Heart left ventricle (tissue), 16 donors: ENCODE measurements at regions of chr1 and their contacts with region 1.

Region 1: GRCh38 chr1:20151906-20152598 is 12.9 kb downstream of the PLA2G2F start:
- DNase-seq: peak; percentile 81 to 92 (median 90)
- ATAC-seq: peak; percentile 85 to 95 (median 92)
- H3K4me3 ChIP-seq: peak overlapping the region; percentile 3 to 55 (median 43)
- H3K27ac ChIP-seq: peak overlapping the region in 5 of 12 donors; percentile 18 to 79 (median 40)
- H3K4me1 ChIP-seq: peaks cover 0 to 27% (median 10%) of the 10 kb centered on the region in 12 donors
- H3K27me3 ChIP-seq: peaks cover 0 to 7% (median 0%) of the 10 kb centered on the region in 9 donors
- CTCF ChIP-seq: peak; percentile 90 to 97 (median 94)
- POLR2A ChIP-seq: no peak

Region 2: GRCh38 chr1:19300211-19300610 is 851.8 kb before region 1 on chr1:
- intact Hi-C with region 1: no loop called
- DNase-seq: no peak
- ATAC-seq: no peak
- H3K4me3 ChIP-seq: no peak overlapping the region
- H3K27ac ChIP-seq: no peak overlapping the region
- H3K4me1 ChIP-seq: no peaks in the 10 kb centered on the region
- H3K27me3 ChIP-seq: no peaks in the 10 kb centered on the region
- CTCF ChIP-seq: no peak
- POLR2A ChIP-seq: no peak

Region 3: GRCh38 chr1:19918057-19918456 is 234.0 kb before region 1 on chr1:
- intact Hi-C with region 1: loop called (anchors 1 to 2 kb)
- DNase-seq: peak; percentile 74 to 86 (median 79)
- ATAC-seq: peak; percentile 69 to 84 (median 71)
- H3K4me3 ChIP-seq: no peak overlapping the region
- H3K27ac ChIP-seq: no peak overlapping the region
- H3K4me1 ChIP-seq: peaks cover 0 to 11% (median 0%) of the 10 kb centered on the region in 12 donors
- H3K27me3 ChIP-seq: peaks cover 0 to 5% (median 0%) of the 10 kb centered on the region in 9 donors
- CTCF ChIP-seq: peak; percentile 83 to 94 (median 89)
- POLR2A ChIP-seq: no peak

Region 4: GRCh38 chr1:19974822-19975416 is 177.1 kb before region 1 on chr1:
- intact Hi-C with region 1: loop called in 8 of 10 experiments (anchors 1 to 10 kb)
- DNase-seq: peak in 4 of 5 donors; percentile 55 to 58 (median 56)
- ATAC-seq: peak; percentile 79 to 85 (median 84)
- H3K4me3 ChIP-seq: peak overlapping the region in 1 of 12 donors; percentile 26
- H3K27ac ChIP-seq: peak overlapping the region in 3 of 12 donors; percentile 1 to 24 (median 16)
- H3K4me1 ChIP-seq: peaks cover 0 to 18% (median 10%) of the 10 kb centered on the region in 12 donors
- H3K27me3 ChIP-seq: no peaks in the 10 kb centered on the region
- CTCF ChIP-seq: peak; percentile 58 to 87 (median 82)
- POLR2A ChIP-seq: no peak

Region 5: DNA sequence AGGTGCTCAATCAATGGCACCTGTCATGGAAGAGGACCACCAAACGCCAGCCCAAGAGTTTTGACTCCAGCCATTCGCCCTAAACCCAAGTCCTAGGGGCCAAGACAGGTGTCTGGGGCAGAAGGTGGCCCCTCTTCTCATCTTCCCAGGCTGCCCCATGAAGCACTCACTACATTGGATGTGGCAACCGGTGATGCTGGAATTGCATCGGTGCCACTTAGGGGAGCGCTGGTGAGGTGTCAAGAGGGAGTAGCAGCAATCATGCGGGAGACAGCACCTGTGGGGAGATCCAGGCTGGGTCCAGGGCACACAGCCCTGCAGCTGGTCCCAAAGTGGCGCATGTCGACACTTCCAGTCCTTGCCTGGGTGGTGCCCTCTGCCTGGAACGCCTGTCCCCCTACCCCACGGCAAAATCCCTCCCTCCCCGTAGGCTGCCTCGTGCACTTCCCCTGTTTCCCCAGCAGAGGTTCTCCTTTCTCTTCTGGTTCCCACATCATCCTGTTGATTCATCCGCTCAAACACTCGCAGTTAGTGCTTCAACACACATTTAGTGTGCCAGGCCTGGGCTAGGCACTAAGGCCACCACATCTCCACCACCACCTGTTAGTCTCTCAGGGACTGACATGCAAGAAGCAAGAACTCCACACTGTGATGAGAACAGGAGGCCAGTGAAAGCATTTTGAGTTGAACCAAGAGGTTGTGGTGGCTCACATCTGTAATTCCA is 51.3 kb before region 1 on chr1:
- intact Hi-C with region 1: loop called (anchors 2 to 10 kb)
- DNase-seq: peak in 4 of 5 donors; percentile 30 to 43 (median 38)
- ATAC-seq: peak in 3 of 4 donors; percentile 82 to 87 (median 83)
- H3K4me3 ChIP-seq: no peak overlapping the region
- H3K27ac ChIP-seq: no peak overlapping the region
- H3K4me1 ChIP-seq: peaks cover 0 to 10% (median 0%) of the 10 kb centered on the region in 12 donors
- H3K27me3 ChIP-seq: peaks cover 0 to 5% (median 0%) of the 10 kb centered on the region in 9 donors
- CTCF ChIP-seq: peak; percentile 59 to 77 (median 70)
- POLR2A ChIP-seq: no peak

Region 6: DNA sequence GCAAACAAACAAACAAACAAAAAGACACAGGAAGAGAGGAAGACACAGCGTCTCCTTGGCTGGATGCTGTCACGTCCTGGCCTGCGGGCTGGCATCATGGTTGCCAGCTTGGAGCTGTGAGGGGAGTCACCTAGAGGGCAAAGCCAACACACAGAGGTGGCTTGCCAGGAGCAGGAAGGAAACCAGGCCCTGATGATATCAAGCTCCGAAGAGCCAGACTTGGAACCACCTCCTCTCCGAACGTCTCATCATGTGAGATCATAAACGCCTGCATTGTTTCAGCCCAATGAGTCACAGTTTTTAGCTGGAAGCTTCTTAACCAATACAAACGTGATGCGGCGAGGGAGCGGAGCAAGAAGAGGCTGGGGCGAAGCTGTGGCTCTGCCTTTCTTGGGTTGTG is 41.4 kb before region 1 on chr1:
- intact Hi-C with region 1: loop called in 2 of 10 experiments (anchors 5 to 10 kb)
- DNase-seq: peak in 1 of 5 donors; percentile 29
- ATAC-seq: peak in 3 of 4 donors; percentile 19 to 70 (median 52)
- H3K4me3 ChIP-seq: no peak overlapping the region
- H3K27ac ChIP-seq: peak overlapping the region in 1 of 12 donors; percentile 63
- H3K4me1 ChIP-seq: peaks cover 0 to 9% (median 0%) of the 10 kb centered on the region in 12 donors
- H3K27me3 ChIP-seq: peaks cover 0 to 8% (median 0%) of the 10 kb centered on the region in 9 donors
- CTCF ChIP-seq: no peak
- POLR2A ChIP-seq: no peak